H1 (cell line): ENCODE measurements at regions of chr15 and their contacts with region 1.

Region 1: GRCh38 chr15:57138349-57138788 is 219.9 kb downstream of the TCF12 start:
- DNase-seq: peak in 1 of 2 experiments; percentile 41
- H3K4me3 ChIP-seq: no peak overlapping the region
- H3K27ac ChIP-seq: no peak overlapping the region
- H3K4me1 ChIP-seq: peaks cover 1 to 11% (median 6%) of the 10 kb centered on the region in 4 experiments; a peak in 6 of 7 replicates
- H3K27me3 ChIP-seq: no peaks in the 10 kb centered on the region
- CTCF ChIP-seq: peak; percentile 29 to 86 (median 71)
- EP300 ChIP-seq: no peak
- POLR2A ChIP-seq: no peak
- RAD21 ChIP-seq: peak; percentile 72 to 80

Region 2: GRCh38 chr15:57114070-57114469 is 24.3 kb before region 1 on chr15:
- CTCF ChIA-PET with region 1: interaction called, 10 read pairs
- POLR2A ChIA-PET with region 1: no interaction called
- DNase-seq: no peak
- H3K4me3 ChIP-seq: no peak overlapping the region
- H3K27ac ChIP-seq: no peak overlapping the region
- H3K4me1 ChIP-seq: peaks cover 0 to 10% (median 4%) of the 10 kb centered on the region in 4 experiments; a peak in 3 of 7 replicates
- H3K27me3 ChIP-seq: no peaks in the 10 kb centered on the region
- CTCF ChIP-seq: no peak
- EP300 ChIP-seq: no peak
- POLR2A ChIP-seq: no peak
- RAD21 ChIP-seq: no peak

Region 3: GRCh38 chr15:57152666-57153539 is 14.5 kb after region 1 on chr15:
- CTCF ChIA-PET with region 1: interaction called, 17 read pairs
- POLR2A ChIA-PET with region 1: interaction called, 3 read pairs
- DNase-seq: no peak
- H3K4me3 ChIP-seq: no peak overlapping the region
- H3K27ac ChIP-seq: no peak overlapping the region
- H3K4me1 ChIP-seq: no peaks in the 10 kb centered on the region
- H3K27me3 ChIP-seq: no peaks in the 10 kb centered on the region
- CTCF ChIP-seq: no peak
- EP300 ChIP-seq: no peak
- POLR2A ChIP-seq: no peak
- RAD21 ChIP-seq: no peak